ENCODE measurements at regions of chr17 and their contacts with region 1.

Region 1: GRCh38 chr17:38868817-38869525 is 887 bp upstream of the LASP1 start:
- DNase-seq: peak; percentile 82 to 93 (median 90)
- ATAC-seq: peak; percentile 67
- H3K4me3 ChIP-seq: peak overlapping the region; percentile 98
- H3K4me3 Mint-ChIP-seq: peak overlapping the region; percentile 94 to 100 (median 99)
- H3K27ac ChIP-seq: peak overlapping the region; percentile 88
- H3K27ac Mint-ChIP-seq: peak overlapping the region; percentile 90 to 98 (median 97)
- H3K4me1 ChIP-seq: peaks cover 35 to 38% of the 10 kb centered on the region in 2 donors
- H3K4me1 Mint-ChIP-seq: peaks cover 33 to 49% (median 48%) of the 10 kb centered on the region in 7 donors
- H3K27me3 ChIP-seq: no peaks in the 10 kb centered on the region
- H3K27me3 Mint-ChIP-seq: peaks cover 0 to 6% (median 0%) of the 10 kb centered on the region in 5 donors

Region 2: GRCh38 chr17:38674749-38675615 is 194.0 kb before region 1 on chr17 and contains the start of gene EPOP:
- CTCF ChIA-PET with region 1: no interaction called
- POLR2A ChIA-PET with region 1: no interaction called
- intact Hi-C with region 1: loop called in 1 of 2 experiments (anchors 5 kb)
- DNase-seq: peak; percentile 67 to 95 (median 71)
- ATAC-seq: peak; percentile 93
- H3K4me3 ChIP-seq: peak within 1 kb of the TSS; percentile 43
- H3K4me3 Mint-ChIP-seq: peak within 1 kb of the TSS; percentile 63 to 80 (median 75)
- H3K27ac ChIP-seq: peak within 1 kb of the TSS; percentile 54
- H3K27ac Mint-ChIP-seq: peak within 1 kb of the TSS in 4 of 9 donors; percentile 17 to 69 (median 58)
- H3K4me1 ChIP-seq: peaks cover 5 to 7% of the 10 kb centered on the region in 2 donors
- H3K4me1 Mint-ChIP-seq: peaks cover 8 to 30% (median 23%) of the 10 kb centered on the region in 7 donors
- H3K27me3 ChIP-seq: peaks cover 0 to 12% of the 10 kb centered on the region in 2 donors
- H3K27me3 Mint-ChIP-seq: peaks cover 19 to 37% (median 24%) of the 10 kb centered on the region in 5 donors
- total RNA-seq, gene EPOP: 0.19 to 13.4 (median 0.34) TPM

Region 3: DNA sequence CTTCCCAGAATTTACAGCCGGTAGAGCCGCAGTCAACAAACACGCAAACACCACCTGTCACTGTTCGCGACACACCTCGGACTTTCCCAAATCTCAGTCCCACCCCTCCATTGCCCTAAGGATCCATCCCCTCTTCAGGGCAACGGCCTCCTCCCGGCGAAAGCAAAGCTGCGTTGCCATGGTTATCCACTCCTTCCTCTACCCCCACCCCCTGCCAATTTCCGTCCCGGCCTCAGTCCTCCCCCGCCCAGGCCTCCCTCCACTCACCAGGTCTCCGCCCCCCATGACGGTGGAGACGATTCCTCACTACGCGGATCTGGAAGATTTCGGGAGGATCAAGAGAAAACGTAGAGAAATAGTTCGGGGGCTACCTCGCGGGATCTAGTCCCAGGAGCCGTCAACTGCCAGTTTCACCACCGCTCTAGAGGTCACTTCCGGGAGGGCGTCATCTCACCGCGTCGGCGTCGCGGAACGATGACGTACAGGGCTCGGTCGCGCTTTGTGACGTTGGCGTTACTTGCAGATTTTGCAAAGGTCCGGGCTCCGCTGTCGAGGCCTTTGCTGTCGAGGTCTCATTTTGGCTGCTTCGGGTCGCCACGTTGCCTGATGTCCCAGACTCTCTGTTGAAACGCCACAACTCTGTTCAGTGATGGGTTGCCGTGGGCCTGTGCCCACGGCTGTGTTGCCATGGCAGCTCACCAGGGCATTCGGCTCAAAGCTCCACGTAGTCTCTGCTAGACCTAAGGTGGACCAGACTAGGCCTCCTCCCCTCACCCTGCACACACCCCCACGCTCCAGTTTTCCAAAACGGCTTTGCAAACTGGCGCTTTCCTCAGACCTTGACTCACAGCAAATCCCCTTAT is 43.8 kb before region 1 on chr17 and contains the start of gene CWC25:
- CTCF ChIA-PET with region 1: interaction called, 3 read pairs
- POLR2A ChIA-PET with region 1: interaction called, 14 read pairs
- intact Hi-C with region 1: loop called (anchors 1 kb)
- DNase-seq: peak; percentile 91 to 100 (median 97)
- ATAC-seq: peak; percentile 92
- H3K4me3 ChIP-seq: peak within 1 kb of the TSS; percentile 77
- H3K4me3 Mint-ChIP-seq: peak within 1 kb of the TSS; percentile 92 to 100 (median 99)
- H3K27ac ChIP-seq: peak within 1 kb of the TSS; percentile 92
- H3K27ac Mint-ChIP-seq: peak within 1 kb of the TSS; percentile 97 to 100 (median 100)
- H3K4me1 ChIP-seq: peaks cover 18 to 21% of the 10 kb centered on the region in 2 donors
- H3K4me1 Mint-ChIP-seq: peaks cover 13 to 42% (median 34%) of the 10 kb centered on the region in 7 donors
- H3K27me3 ChIP-seq: no peaks in the 10 kb centered on the region
- H3K27me3 Mint-ChIP-seq: peaks cover 0 to 5% (median 0%) of the 10 kb centered on the region in 5 donors
- total RNA-seq, gene CWC25: 33.0 to 69.5 (median 53.4) TPM

Region 4: DNA sequence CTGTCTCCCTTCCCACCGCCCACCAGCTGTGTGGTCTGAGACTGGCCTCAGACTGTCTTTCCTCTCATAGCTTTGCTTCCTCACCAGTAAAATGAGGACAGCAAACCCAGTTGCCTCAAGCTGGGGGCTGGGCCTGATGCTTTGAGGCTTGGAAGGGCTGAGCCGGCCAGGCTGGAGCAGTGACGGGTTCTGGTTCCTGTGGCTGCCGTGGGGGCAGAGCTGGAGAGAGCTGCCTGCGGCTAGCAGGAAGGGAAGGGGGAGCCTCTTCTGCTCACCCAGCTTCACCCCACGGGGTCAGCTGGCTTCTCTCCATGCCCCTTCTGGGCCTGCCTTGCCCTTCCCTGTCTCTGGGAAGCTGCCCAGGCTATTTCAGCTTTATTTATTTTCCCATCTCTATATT is 24.6 kb after region 1 on chr17:
- CTCF ChIA-PET with region 1: interaction called, 5 read pairs
- POLR2A ChIA-PET with region 1: interaction called, 57 read pairs
- intact Hi-C with region 1: loop called (anchors 1 kb)
- DNase-seq: no peak
- ATAC-seq: peak; percentile 40
- H3K4me3 ChIP-seq: no peak overlapping the region
- H3K4me3 Mint-ChIP-seq: peak overlapping the region in 4 of 10 donors; percentile 12 to 72 (median 48)
- H3K27ac ChIP-seq: peak overlapping the region; percentile 52
- H3K27ac Mint-ChIP-seq: peak overlapping the region; percentile 54 to 95 (median 88)
- H3K4me1 ChIP-seq: peaks cover 80 to 90% of the 10 kb centered on the region in 2 donors
- H3K4me1 Mint-ChIP-seq: peaks cover 43 to 89% (median 79%) of the 10 kb centered on the region in 7 donors
- H3K27me3 ChIP-seq: no peaks in the 10 kb centered on the region
- H3K27me3 Mint-ChIP-seq: no peaks in the 10 kb centered on the region

Region 5: GRCh38 chr17:38967290-38967738 is 98.3 kb after region 1 on chr17 and contains the start of gene FBXO47:
- CTCF ChIA-PET with region 1: interaction called, 3 read pairs
- POLR2A ChIA-PET with region 1: interaction called, 9 read pairs
- intact Hi-C with region 1: loop called in 1 of 2 experiments (anchors 1 kb)
- DNase-seq: peak; percentile 38 to 86 (median 77)
- ATAC-seq: peak; percentile 99
- H3K4me3 ChIP-seq: peak within 1 kb of the TSS; percentile 43
- H3K4me3 Mint-ChIP-seq: peak within 1 kb of the TSS; percentile 55 to 84 (median 81)
- H3K27ac ChIP-seq: peak within 1 kb of the TSS; percentile 59
- H3K27ac Mint-ChIP-seq: peak within 1 kb of the TSS; percentile 31 to 96 (median 69)
- H3K4me1 ChIP-seq: peaks cover 0 to 16% of the 10 kb centered on the region in 2 donors
- H3K4me1 Mint-ChIP-seq: peaks cover 11 to 28% (median 15%) of the 10 kb centered on the region in 7 donors
- H3K27me3 ChIP-seq: no peaks in the 10 kb centered on the region
- H3K27me3 Mint-ChIP-seq: peaks cover 0 to 2% (median 0%) of the 10 kb centered on the region in 5 donors
- total RNA-seq, gene FBXO47: not detected

Region 6: GRCh38 chr17:39099663-39100286 is 230.8 kb after region 1 on chr17:
- CTCF ChIA-PET with region 1: no interaction called
- POLR2A ChIA-PET with region 1: no interaction called
- intact Hi-C with region 1: loop called in 1 of 2 experiments (anchors 10 kb)
- DNase-seq: no peak
- ATAC-seq: no peak
- H3K4me3 ChIP-seq: no peak overlapping the region
- H3K4me3 Mint-ChIP-seq: peak overlapping the region in 1 of 10 donors; percentile 48
- H3K27ac ChIP-seq: no peak overlapping the region
- H3K27ac Mint-ChIP-seq: peak overlapping the region in 6 of 9 donors; percentile 8 to 95 (median 84)
- H3K4me1 ChIP-seq: peaks cover 25 to 70% of the 10 kb centered on the region in 2 donors
- H3K4me1 Mint-ChIP-seq: peaks cover 32 to 81% (median 75%) of the 10 kb centered on the region in 7 donors
- H3K27me3 ChIP-seq: no peaks in the 10 kb centered on the region
- H3K27me3 Mint-ChIP-seq: peaks cover 0 to 3% (median 0%) of the 10 kb centered on the region in 5 donors

Region 7: GRCh38 chr17:39283896-39284295 is 414.9 kb after region 1 on chr17:
- CTCF ChIA-PET with region 1: no interaction called
- POLR2A ChIA-PET with region 1: no interaction called
- intact Hi-C with region 1: no loop called
- DNase-seq: no peak
- ATAC-seq: no peak
- H3K4me3 ChIP-seq: no peak overlapping the region
- H3K4me3 Mint-ChIP-seq: no peak overlapping the region
- H3K27ac ChIP-seq: no peak overlapping the region
- H3K27ac Mint-ChIP-seq: peak overlapping the region in 1 of 9 donors; percentile 34
- H3K4me1 ChIP-seq: no peaks in the 10 kb centered on the region
- H3K4me1 Mint-ChIP-seq: no peaks in the 10 kb centered on the region
- H3K27me3 ChIP-seq: no peaks in the 10 kb centered on the region
- H3K27me3 Mint-ChIP-seq: no peaks in the 10 kb centered on the region

Region 8: GRCh38 chr17:39461113-39461925 is 592.3 kb after region 1 on chr17 and contains the start of gene CDK12:
- CTCF ChIA-PET with region 1: no interaction called
- POLR2A ChIA-PET with region 1: no interaction called
- intact Hi-C with region 1: loop called in 1 of 2 experiments (anchors 5 kb)
- DNase-seq: peak; percentile 76 to 98 (median 95)
- ATAC-seq: peak; percentile 91
- H3K4me3 ChIP-seq: peak within 1 kb of the TSS; percentile 73
- H3K4me3 Mint-ChIP-seq: peak within 1 kb of the TSS; percentile 93 to 100 (median 98)
- H3K27ac ChIP-seq: peak within 1 kb of the TSS; percentile 89
- H3K27ac Mint-ChIP-seq: peak within 1 kb of the TSS; percentile 89 to 99 (median 97)
- H3K4me1 ChIP-seq: peaks cover 8 to 13% of the 10 kb centered on the region in 2 donors
- H3K4me1 Mint-ChIP-seq: peaks cover 27 to 51% (median 41%) of the 10 kb centered on the region in 7 donors
- H3K27me3 ChIP-seq: no peaks in the 10 kb centered on the region
- H3K27me3 Mint-ChIP-seq: no peaks in the 10 kb centered on the region
- total RNA-seq, gene CDK12: 94.9 to 118 (median 112) TPM

Measured in naive thymus-derived CD4-positive, alpha-beta T cell (primary cell).